Activated CD4-positive, alpha-beta T cell treated with anti-CD3 and anti-CD28 coated beads, Interleukin-2, amount 10 ng/mL, durations not matched to agents 24 days and 14 days (primary cell): ENCODE measurements at regions of chr7 and their contacts with region 1.

Region 1: DNA sequence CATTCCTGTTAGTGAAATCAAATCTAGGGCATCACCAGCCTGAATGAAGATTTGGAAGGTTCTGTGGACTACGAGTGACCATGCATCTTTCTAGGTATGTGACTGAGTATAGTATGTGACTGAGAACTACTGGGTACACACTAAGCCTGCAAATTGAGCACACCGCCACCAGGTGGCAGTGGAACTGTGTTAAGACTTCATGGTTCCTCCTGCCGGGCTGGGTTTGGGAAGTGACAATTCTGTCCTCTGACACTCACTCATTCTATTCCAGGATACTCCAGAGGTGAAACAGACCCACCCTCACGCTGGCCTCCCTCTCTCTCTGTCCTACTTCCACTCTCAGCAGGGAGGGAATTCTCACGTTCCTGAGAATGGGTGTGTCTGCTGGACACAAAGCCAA is 84.0 kb upstream of the TMEM248 start:
- DNase-seq: peak; percentile 74
- H3K4me3 Mint-ChIP-seq: no peak overlapping the region
- H3K27ac Mint-ChIP-seq: no peak overlapping the region
- H3K4me1 Mint-ChIP-seq: no peaks in the 10 kb centered on the region
- H3K27me3 Mint-ChIP-seq: no peaks in the 10 kb centered on the region

Region 2: DNA sequence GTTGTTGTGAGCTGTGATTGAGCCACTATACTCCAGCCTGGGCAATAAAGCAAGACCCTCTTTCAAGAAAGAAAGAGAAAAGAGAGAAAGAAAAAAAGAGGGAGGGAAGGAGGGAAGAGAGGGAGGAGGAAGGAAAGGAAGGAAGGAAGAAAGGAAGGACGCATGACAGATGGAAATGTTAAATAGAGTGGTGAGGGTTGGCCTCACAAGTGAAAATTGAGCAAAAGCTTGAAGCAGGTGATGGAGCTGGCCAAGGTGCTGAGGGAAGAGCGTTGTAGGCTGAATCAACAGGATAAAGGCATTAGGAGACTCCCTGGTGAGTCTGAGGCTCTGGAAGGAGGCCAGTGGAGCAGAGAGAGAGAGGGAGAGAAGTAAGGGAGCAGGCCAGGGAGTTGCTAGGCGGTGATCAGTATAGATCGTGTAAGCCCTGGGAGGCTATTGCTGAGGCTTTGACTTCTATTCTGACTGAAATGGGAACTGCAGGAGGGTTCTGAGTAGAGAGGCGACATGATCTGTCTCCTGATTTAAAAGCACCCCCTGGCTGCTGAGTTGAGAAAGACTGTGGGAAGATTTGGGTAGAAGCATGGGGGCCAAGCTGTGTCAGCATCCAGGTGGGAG is 57.6 kb after region 1 on chr7:
- intact Hi-C with region 1: loop called (anchors 1 kb)
- DNase-seq: peak; percentile 62
- H3K4me3 Mint-ChIP-seq: no peak overlapping the region
- H3K27ac Mint-ChIP-seq: no peak overlapping the region
- H3K4me1 Mint-ChIP-seq: no peaks in the 10 kb centered on the region
- H3K27me3 Mint-ChIP-seq: no peaks in the 10 kb centered on the region